Gastrocnemius medialis (tissue), 4 donors: ENCODE measurements at regions of chr19 and their contacts with region 1.

Region 1: DNA sequence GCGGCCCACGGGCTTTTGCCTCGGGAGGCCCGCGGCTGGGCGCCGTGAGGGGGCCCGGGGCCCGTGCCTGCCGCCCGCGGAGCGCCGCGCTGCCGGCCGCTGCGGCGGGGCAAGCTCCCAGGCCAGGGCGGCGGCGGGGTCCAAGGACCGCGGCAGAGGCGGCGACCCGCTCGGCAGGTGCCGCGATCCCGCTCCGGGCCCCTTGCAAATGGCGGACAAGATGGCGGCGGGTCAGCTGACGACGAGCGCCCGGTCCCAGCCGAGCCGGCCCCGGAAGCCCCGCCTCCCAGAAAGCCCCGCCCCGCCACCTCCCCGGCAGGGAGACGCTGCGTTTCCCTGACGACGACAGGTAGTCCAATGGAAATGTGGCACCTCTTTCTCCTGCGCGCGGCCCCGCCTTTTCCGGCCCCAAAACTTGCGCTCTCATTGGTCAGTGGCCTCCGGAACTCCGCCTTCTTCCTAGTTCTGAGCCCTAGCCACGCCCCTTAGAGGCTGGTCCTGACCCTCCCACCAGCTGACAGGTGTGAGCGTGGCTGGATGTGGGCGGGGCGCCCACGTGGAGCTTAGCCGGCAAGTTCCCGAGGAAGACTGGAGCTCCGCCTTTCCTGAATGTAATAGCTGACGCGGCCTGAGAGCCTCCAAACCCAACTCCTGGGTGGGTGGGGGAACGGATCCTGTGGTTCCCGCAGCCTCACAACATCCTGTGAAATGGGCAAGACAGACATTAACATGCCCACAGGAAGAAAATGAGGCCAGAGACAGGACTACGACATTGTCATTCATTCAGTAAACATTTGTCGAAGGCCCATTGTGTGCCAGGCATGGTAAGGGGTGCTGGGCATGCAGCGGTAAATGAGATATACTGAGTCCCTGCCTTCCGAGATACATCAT is at the start of gene AP3D1:
- DNase-seq: peak; percentile 100
- ATAC-seq: peak; percentile 92 to 94
- H3K4me3 ChIP-seq: peak within 1 kb of the TSS; percentile 83 to 100 (median 92)
- H3K27ac ChIP-seq: peak within 1 kb of the TSS; percentile 92 to 97 (median 96)
- H3K4me1 ChIP-seq: peaks cover 26 to 34% of the 10 kb centered on the region in 2 donors
- H3K27me3 ChIP-seq: no peaks in the 10 kb centered on the region
- CTCF ChIP-seq: no peak
- POLR2A ChIP-seq: peak; percentile 62 to 86
- total RNA-seq, gene AP3D1: 71.0 to 139 (median 99.0) TPM

Region 2: DNA sequence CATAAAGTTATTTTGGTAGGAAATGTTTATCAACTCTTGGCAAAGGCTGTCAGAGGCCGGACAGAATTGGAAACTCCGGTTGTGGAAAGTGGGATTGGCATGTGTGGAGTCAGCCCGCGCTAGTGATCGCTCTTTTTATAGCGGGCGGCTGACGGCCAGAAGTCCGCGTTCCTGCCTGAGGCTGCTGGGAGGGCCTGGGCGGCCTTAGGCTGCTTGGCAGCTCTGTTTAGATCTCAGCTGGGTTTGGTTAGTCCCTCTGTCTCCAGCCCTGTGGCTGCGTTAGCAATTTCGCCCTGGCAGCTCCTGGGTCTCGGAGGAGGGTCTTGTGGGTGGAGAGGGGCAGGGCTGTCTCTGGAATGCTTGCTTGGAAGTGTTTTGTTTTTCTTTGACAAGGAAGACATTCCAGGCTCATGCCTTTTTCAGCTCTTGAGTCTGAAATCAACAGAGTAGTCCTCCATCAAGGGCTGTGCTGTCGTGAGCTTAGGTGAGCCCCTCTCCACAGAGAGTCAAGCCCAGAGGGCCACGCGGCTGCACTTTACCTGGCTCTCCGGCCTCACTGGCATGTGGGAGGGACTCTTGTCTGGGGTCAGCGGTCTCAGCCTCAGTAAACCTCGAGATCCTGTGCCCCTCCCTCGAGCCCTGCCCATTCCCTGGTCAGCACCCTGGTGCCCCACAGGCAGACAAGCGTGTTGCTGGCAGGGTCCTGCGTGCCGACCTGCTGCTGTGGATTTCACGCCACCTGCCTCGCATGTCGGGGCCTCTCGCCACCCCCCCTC is 34.7 kb after region 1 on chr19:
- in situ Hi-C with region 1: no loop called
- intact Hi-C with region 1: loop called (anchors 1 kb)
- DNase-seq: peak; percentile 92 to 97
- ATAC-seq: peak; percentile 96
- H3K4me3 ChIP-seq: peak overlapping the region in 3 of 4 donors; percentile 1 to 26 (median 18)
- H3K27ac ChIP-seq: peak overlapping the region; percentile 81 to 94 (median 86)
- H3K4me1 ChIP-seq: peaks cover 35 to 57% of the 10 kb centered on the region in 2 donors
- H3K27me3 ChIP-seq: no peaks in the 10 kb centered on the region
- CTCF ChIP-seq: peak in 1 of 5 experiments; percentile 6
- POLR2A ChIP-seq: no peak

Region 3: DNA sequence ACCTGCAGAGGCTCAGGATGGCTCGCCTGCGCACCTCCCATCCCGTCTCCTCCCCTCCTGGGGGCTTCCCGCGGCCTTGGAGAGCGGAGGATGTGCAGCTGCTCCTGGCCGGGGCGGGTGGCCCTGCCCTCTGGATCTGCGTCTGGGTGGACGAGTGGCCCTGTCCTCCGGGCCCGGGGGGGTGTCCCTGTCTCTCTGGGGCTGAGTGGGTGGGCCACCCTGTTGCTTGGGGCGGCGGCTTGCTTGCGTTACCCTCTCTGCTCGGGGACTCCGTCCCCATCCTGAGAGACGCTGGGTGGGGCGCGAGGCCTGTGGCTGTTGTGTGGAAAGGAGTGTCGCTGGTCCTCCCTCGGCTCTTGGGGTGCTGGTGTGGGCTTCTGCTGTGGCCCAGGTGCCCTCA is 46.7 kb after region 1 on chr19:
- in situ Hi-C with region 1: no loop called
- intact Hi-C with region 1: no loop called
- DNase-seq: no peak
- ATAC-seq: no peak
- H3K4me3 ChIP-seq: no peak overlapping the region
- H3K27ac ChIP-seq: no peak overlapping the region
- H3K4me1 ChIP-seq: no peaks in the 10 kb centered on the region
- H3K27me3 ChIP-seq: no peaks in the 10 kb centered on the region
- CTCF ChIP-seq: no peak
- POLR2A ChIP-seq: no peak

Region 4: GRCh38 chr19:2236314-2237050 is 84.9 kb after region 1 on chr19 and contains the starts of genes PLEKHJ1 and SF3A2:
- in situ Hi-C with region 1: loop called in 1 of 4 experiments (anchors 10 kb)
- intact Hi-C with region 1: loop called (anchors 1 kb)
- DNase-seq: peak; percentile 95 to 97
- ATAC-seq: peak; percentile 83 to 90
- H3K4me3 ChIP-seq: peak within 1 kb of the TSS; percentile 67 to 94 (median 86)
- H3K27ac ChIP-seq: peak within 1 kb of the TSS; percentile 94 to 98 (median 97)
- H3K4me1 ChIP-seq: peaks cover 56 to 64% of the 10 kb centered on the region in 2 donors
- H3K27me3 ChIP-seq: no peaks in the 10 kb centered on the region
- CTCF ChIP-seq: peak; percentile 100
- POLR2A ChIP-seq: peak; percentile 75 to 92
- total RNA-seq, gene PLEKHJ1: 50.1 to 72.4 (median 61.6) TPM
- total RNA-seq, gene SF3A2: 23.9 to 29.2 (median 26.5) TPM

Region 5: DNA sequence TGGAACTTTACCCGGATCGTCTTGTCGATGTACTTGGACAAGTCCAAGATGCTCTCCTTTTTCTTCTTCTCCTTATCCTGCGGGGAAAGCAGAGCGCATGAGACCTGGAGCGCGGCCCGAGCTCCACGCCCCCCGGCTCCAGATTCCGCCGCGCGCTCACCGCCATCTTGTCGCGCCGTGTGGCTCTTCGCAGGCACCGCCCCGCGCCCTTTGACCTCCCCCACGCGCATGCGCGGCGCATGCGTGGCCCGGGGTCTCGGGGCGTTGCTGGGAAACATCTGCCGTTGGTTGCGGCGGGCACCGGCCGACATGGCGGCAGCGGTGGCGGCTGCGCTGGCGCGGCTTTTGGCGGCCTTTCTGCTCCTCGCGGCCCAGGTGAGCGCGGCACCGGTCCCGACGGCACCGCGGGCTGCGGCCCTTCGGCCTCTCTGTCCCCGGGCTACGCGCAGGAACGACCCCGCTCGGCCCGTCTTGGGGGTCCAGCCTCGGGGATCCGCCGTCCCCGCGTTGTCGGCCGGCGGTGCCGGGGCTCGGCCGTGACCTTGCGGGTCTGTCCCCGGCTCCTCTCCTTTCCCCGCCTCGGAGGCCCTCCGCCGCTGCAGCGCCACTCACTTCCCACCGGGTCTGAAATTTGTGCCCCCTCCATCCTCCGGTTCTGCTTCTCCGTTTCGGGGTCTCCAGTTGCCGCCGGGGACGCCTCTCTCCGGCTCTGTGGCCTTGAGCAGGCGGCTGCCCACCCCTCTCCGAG is 177.0 kb after region 1 on chr19 and contains the starts of genes LSM7 and SPPL2B:
- in situ Hi-C with region 1: loop called in 1 of 4 experiments (anchors 10 kb)
- intact Hi-C with region 1: no loop called
- DNase-seq: peak; percentile 82 to 89
- ATAC-seq: peak; percentile 54 to 77
- H3K4me3 ChIP-seq: peak within 1 kb of the TSS; percentile 73 to 84 (median 78)
- H3K27ac ChIP-seq: peak within 1 kb of the TSS; percentile 81 to 96 (median 91)
- H3K4me1 ChIP-seq: peaks cover 55% of the 10 kb centered on the region in 2 donors
- H3K27me3 ChIP-seq: no peaks in the 10 kb centered on the region
- CTCF ChIP-seq: peak in 1 of 5 experiments; percentile 10
- POLR2A ChIP-seq: peak; percentile 97
- total RNA-seq, gene LSM7: 70.0 to 109 (median 77.5) TPM
- total RNA-seq, gene SPPL2B: 18.1 to 27.7 (median 23.2) TPM

Region 6: GRCh38 chr19:2391118-2391725 is 239.6 kb after region 1 on chr19:
- in situ Hi-C with region 1: loop called in 2 of 4 experiments (anchors 10 kb)
- intact Hi-C with region 1: loop called (anchors 5 kb)
- DNase-seq: no peak
- ATAC-seq: peak; percentile 63 to 67
- H3K4me3 ChIP-seq: no peak overlapping the region
- H3K27ac ChIP-seq: no peak overlapping the region
- H3K4me1 ChIP-seq: no peaks in the 10 kb centered on the region
- H3K27me3 ChIP-seq: peaks cover 0 to 3% (median 0%) of the 10 kb centered on the region in 3 donors
- CTCF ChIP-seq: peak; percentile 70 to 81 (median 75)
- POLR2A ChIP-seq: no peak